Mucosa of descending colon (tissue), 3 donors: ENCODE measurements at regions of chr9 and their contacts with region 1.

Region 1: DNA sequence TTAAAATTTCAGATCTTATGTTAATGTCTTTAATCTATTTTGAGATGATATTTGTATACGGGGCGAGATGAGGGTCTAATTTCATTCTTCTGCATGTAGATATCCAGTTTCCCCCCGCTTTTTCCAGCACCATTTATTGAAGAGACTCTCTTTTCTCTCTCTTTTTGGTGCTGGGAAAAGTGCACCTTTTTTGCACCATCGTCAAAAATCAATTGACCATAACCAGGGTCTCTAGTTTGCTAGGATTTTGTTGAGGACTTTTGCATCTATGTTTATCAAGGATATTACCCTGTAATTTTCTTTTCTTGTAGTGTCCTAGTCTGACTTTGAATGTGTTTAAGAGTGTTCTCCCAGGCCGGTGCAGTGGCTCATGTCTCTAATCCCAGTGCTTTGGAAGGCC is 93.3 kb downstream of the STX17 start:
- DNase-seq: no peak
- ATAC-seq: no peak
- H3K4me3 ChIP-seq: no peak overlapping the region
- H3K4me1 ChIP-seq: no peaks in the 10 kb centered on the region
- CTCF ChIP-seq: no peak

Region 2: DNA sequence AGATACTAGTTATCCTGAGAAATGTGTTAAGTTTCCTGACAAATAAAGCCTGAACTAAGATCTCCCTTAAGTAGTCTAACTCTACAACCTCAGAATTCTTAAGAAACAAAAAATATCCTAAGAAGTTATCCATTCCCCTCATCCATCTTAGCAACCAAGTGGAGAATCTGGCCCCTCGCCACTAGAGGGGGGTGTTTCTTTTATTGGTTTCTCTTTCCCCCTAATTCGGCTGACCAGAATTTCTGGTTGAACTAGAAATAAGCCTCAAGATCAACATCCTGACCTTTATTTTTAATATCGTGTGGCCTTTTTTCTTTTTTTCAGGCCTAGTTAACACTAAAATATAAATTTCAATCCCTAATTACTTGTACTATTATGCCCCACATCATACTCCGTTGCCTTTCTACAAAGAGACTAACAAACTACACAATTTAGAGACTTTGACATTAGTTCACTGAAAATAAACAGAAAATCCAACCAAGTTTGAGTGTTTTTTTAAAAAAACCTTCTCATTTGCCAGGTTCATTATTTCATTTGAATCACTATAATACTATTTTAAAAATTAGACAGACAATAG is 192.4 kb before region 1 on chr9:
- intact Hi-C with region 1: loop called in 1 of 2 experiments (anchors 10 kb)
- DNase-seq: peak in 2 of 3 donors; percentile 47 to 80
- ATAC-seq: peak; percentile 74
- H3K4me3 ChIP-seq: no peak overlapping the region
- H3K4me1 ChIP-seq: no peaks in the 10 kb centered on the region
- CTCF ChIP-seq: peak; percentile 61

Region 3: GRCh38 chr9:99840072-99840471 is 159.7 kb before region 1 on chr9:
- intact Hi-C with region 1: no loop called
- DNase-seq: no peak
- ATAC-seq: no peak
- H3K4me3 ChIP-seq: no peak overlapping the region
- H3K4me1 ChIP-seq: no peaks in the 10 kb centered on the region
- CTCF ChIP-seq: no peak